ENCODE measurements at regions of chr9 and their contacts with region 1.

Region 1: GRCh38 chr9:19925817-19926503 is 137.1 kb upstream of the SLC24A2 start:
- DNase-seq: peak; percentile 48 to 96 (median 76)

Region 2: DNA sequence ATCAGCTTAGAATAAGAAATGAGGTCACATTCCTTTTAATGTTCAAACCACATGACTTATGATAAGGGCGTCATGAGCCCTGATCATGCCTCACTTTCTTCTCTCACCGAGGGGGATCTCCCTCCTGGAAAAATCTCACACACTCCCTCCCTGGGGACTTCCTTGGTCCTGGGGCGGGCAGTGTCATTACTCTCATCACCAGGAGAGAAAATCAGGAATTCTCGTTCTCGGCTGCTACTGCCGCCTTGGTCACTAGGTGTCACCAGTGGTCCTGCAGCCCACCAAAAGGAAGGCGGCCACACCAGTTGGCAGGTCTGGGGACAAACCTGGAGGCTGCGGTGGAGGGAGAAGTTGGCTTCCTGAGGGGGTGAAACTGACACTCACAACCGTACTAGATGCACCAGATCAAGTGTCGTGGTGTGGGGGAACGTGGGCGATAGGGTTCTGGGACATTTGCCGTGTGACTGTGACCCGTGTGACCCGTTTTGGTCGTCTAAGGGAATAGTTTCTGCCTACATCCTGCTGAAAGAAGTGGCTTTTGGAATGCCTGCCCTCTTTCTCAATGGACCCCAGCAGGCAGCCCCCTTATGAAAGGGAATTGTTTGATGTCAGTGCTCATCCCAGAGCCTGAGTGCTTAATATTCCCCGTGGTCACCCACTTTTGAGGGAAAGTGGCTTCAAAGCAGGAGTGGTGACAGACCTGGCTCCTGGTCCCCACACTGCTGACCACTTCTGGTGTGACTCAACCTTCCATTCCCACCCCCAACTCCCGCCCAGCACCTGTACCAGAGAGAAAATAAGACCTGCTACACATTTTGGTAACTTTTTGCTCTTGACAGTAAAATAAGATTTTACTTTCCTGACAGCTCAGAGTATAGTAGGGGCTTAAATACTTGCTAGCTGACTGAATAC is 454.0 kb before region 1 on chr9:
- intact Hi-C with region 1: loop called (anchors 2 kb)
- DNase-seq: peak; percentile 61 to 97 (median 81)

Region 3: GRCh38 chr9:19771446-19771845 is 154.5 kb before region 1 on chr9:
- intact Hi-C with region 1: loop called (anchors 10 kb)
- DNase-seq: no peak

Region 4: GRCh38 chr9:20622330-20623020 is 696.5 kb after region 1 on chr9 and contains the start of gene MLLT3:
- intact Hi-C with region 1: loop called (anchors 5 kb)
- DNase-seq: peak; percentile 93 to 99 (median 96)

Region 5: DNA sequence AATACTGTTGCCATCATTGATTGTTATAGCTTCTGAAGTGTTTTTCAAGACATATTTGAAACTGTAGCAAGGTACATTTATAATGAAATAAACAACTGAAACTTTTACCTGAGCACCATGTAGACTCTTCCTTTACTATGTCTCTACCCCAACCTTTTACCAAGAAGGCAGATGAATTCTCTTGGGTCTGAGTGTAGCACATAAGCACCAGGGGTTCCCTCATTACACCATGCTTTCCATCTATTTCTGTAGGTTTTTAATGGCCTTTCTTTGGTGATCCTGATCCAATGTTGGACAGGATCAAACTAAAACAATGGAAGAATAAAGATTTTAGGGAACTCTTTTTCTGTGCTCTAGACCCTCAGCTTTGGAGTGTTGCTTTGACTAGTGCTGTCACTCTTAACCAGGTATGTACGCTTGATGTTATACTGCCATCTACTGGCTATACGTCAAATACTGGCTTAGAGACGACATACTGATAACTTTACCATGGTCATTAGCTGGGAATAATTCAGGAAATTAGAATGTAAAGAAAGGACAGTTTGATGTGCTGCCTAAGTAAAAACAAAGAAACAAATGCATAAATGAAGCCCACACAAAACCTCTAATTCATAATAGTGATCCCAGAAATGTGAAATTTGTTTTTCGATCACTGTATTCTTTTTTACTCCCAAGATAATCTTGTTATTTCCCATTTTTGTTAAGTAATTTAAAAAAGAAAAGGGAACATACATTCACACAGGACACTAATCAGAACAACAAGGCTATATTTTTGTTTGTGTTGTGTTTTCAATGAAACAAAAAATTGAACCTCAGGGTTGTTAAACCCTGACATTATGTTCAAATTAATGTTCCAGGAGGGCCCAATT is 1185.0 kb after region 1 on chr9:
- intact Hi-C with region 1: loop called (anchors 2 kb)
- DNase-seq: no peak

Measured in posterior cingulate gyrus (tissue), 11 donors.